Activated CD8-positive, alpha-beta T cell treated with anti-CD3 and anti-CD28 coated beads for 36 hours (primary cell): ENCODE measurements at regions of chr2 and their contacts with region 1.

Region 1: DNA sequence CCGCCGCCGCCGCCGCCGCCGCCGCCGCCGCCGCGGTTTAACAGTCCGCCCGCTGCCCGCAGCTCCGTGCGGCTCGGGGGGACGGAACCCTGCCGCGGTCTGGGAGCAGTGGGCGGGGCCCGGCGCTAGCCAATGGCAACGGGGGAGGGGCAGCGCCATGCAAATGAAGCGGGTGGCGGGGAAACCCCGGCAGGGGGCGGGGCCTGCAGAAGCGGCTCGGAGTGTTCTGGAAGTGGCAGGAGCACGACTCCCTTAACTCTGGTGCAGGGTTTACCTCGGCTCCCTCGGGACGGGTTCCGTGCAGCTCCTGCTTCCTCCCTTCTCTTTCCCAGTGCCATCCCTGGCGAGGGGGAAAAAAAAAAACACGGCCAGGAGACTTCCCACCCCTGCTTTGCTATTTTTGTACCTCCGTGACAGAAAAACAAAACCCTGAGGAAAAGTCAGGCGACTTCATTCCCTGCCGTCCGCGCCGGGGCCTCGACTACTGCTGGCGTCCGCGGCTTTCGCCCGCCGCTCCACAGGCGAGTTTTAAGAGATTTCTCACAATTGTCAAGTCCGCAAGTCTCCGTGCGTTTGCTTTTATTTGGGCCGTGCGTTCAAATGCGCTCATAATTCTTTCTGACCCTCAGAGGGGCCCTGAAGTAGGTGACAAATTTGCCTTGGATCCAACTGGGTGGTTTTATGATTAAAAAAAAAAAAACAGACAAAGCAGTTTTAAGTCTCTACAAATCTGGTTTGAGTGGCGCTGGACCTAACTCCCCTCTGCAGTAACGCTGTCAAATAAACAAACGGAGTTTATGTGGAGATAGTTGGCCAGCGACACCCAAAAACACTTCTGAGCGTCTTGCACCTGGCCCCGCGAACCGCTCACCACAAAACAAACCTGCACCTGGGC is at the start of gene KANSL1L:
- DNase-seq: peak; percentile 95
- ATAC-seq: peak; percentile 79
- H3K4me3 Mint-ChIP-seq: peak within 1 kb of the TSS; percentile 87
- H3K27ac Mint-ChIP-seq: peak within 1 kb of the TSS; percentile 96
- H3K4me1 Mint-ChIP-seq: peaks cover 28% of the 10 kb centered on the region
- H3K27me3 Mint-ChIP-seq: peaks cover 2% of the 10 kb centered on the region
- CTCF ChIP-seq: no peak
- total RNA-seq, gene KANSL1L: 4.8 to 5.4 TPM

Region 2: GRCh38 chr2:209685963-209686362 is 485.6 kb before region 1 on chr2:
- CTCF ChIA-PET with region 1: no interaction called
- POLR2A ChIA-PET with region 1: no interaction called
- intact Hi-C with region 1: no loop called
- DNase-seq: no peak
- ATAC-seq: no peak
- H3K4me3 Mint-ChIP-seq: no peak overlapping the region
- H3K27ac Mint-ChIP-seq: no peak overlapping the region
- H3K4me1 Mint-ChIP-seq: no peaks in the 10 kb centered on the region
- H3K27me3 Mint-ChIP-seq: no peaks in the 10 kb centered on the region
- CTCF ChIP-seq: no peak

Region 3: GRCh38 chr2:210002158-210003157 is 169.1 kb before region 1 on chr2 and contains the start of gene RPE:
- CTCF ChIA-PET with region 1: no interaction called
- POLR2A ChIA-PET with region 1: no interaction called
- intact Hi-C with region 1: loop called (anchors 5 kb)
- DNase-seq: peak; percentile 98
- ATAC-seq: peak; percentile 100
- H3K4me3 Mint-ChIP-seq: peak within 1 kb of the TSS; percentile 98
- H3K27ac Mint-ChIP-seq: peak within 1 kb of the TSS; percentile 88
- H3K4me1 Mint-ChIP-seq: peaks cover 48% of the 10 kb centered on the region
- H3K27me3 Mint-ChIP-seq: no peaks in the 10 kb centered on the region
- CTCF ChIP-seq: no peak
- total RNA-seq, gene RPE: 55.9 to 58.1 TPM

Region 4: GRCh38 chr2:210792000-210792399 is 620.4 kb after region 1 on chr2:
- CTCF ChIA-PET with region 1: no interaction called
- POLR2A ChIA-PET with region 1: no interaction called
- intact Hi-C with region 1: no loop called
- DNase-seq: no peak
- ATAC-seq: no peak
- H3K4me3 Mint-ChIP-seq: no peak overlapping the region
- H3K27ac Mint-ChIP-seq: no peak overlapping the region
- H3K4me1 Mint-ChIP-seq: no peaks in the 10 kb centered on the region
- H3K27me3 Mint-ChIP-seq: no peaks in the 10 kb centered on the region
- CTCF ChIP-seq: no peak